ENCODE measurements at regions of chr17 and their contacts with region 1.

Region 1: DNA sequence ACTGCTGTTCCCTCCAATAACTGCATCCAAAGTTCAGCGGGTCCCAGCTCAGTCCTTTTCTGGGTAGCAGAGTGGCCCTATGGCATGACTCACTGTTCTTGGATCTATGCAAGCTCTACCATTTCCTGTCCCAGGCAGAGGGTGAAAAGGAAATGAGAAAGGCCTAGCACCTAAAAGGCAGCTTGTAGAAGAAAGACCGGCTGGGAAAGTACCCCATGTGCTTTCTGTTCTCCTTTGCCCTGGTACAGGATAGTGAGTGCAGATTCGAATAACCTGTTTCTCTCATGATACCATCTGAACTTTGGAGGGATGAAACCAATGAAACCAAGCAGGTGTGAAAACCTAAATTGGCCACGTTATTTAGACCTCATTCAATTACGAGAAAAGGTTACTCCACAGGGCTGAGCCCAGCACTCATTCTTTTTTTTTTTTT is 12.7 kb upstream of the HASPIN start:
- DNase-seq: peak; percentile 30 to 96 (median 67)
- ATAC-seq: peak; percentile 97
- H3K4me3 ChIP-seq: no peak overlapping the region
- H3K4me3 Mint-ChIP-seq: peak overlapping the region; percentile 37
- H3K27ac ChIP-seq: peak overlapping the region in 1 of 2 experiments; percentile 62
- H3K27ac Mint-ChIP-seq: peak overlapping the region; percentile 86
- H3K4me1 ChIP-seq: peaks cover 31% of the 10 kb centered on the region
- H3K4me1 Mint-ChIP-seq: peaks cover 38% of the 10 kb centered on the region
- H3K27me3 ChIP-seq: no peaks in the 10 kb centered on the region
- H3K27me3 Mint-ChIP-seq: no peaks in the 10 kb centered on the region
- CTCF ChIP-seq: no peak

Region 2: DNA sequence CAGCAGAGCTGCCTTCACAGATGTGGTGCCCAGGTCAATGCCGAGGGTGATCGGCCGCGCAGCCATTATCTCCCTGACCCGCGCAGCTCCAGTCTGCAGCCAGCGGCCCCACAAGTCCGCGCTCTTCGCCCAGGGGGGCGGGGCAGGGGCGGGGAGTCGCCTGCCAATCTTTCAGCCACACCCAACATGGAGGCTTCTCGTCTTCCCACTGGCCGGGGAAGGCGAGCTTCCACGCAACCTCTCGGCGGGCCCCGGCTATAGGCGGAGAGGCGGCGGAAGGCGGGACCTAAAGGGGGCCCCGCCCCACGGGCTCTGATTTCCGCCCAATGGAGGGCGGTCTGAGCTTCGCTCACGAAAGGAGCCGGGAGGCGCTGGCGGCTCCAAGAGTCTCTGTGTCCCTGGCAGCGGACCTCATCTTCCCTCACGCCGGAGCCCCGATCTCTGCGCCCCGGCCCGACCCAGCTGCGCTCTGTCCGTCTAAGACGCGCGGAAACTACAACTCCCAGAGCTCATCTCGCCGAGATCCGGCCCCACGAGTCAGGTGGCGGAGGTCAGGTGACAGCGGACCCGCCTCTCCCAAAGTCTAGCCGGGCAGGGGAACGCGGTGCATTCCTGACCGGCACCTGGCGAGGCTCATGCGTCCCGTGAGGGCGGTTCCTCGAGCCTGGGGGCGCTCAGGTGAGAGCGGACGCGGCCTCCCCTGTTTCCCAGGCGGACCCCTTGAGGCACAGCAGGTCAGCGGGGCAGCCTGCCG is 74.6 kb before region 1 on chr17 and contains the starts of genes CTNS and SHPK:
- CTCF ChIA-PET with region 1: no interaction called
- POLR2A ChIA-PET with region 1: no interaction called
- intact Hi-C with region 1: no loop called
- DNase-seq: peak; percentile 86 to 96 (median 94)
- ATAC-seq: peak; percentile 98
- H3K4me3 ChIP-seq: peak within 1 kb of the TSS; percentile 93 to 94
- H3K4me3 Mint-ChIP-seq: peak within 1 kb of the TSS; percentile 97
- H3K27ac ChIP-seq: peak within 1 kb of the TSS; percentile 90 to 99
- H3K27ac Mint-ChIP-seq: peak within 1 kb of the TSS; percentile 99
- H3K4me1 ChIP-seq: peaks cover 8% of the 10 kb centered on the region
- H3K4me1 Mint-ChIP-seq: peaks cover 26% of the 10 kb centered on the region
- H3K27me3 ChIP-seq: no peaks in the 10 kb centered on the region
- H3K27me3 Mint-ChIP-seq: no peaks in the 10 kb centered on the region
- CTCF ChIP-seq: no peak
- total RNA-seq, gene CTNS: 3.1 to 4.2 TPM
- total RNA-seq, gene SHPK: 2.4 to 3.0 TPM

Region 3: GRCh38 chr17:3668279-3669085 is 42.5 kb before region 1 on chr17 and contains the starts of genes EMC6 and TAX1BP3:
- CTCF ChIA-PET with region 1: no interaction called
- POLR2A ChIA-PET with region 1: no interaction called
- intact Hi-C with region 1: loop called in 1 of 2 experiments (anchors 1 kb)
- DNase-seq: peak; percentile 97 to 100 (median 98)
- ATAC-seq: peak; percentile 92
- H3K4me3 ChIP-seq: peak within 1 kb of the TSS; percentile 73 to 100
- H3K4me3 Mint-ChIP-seq: peak within 1 kb of the TSS; percentile 90
- H3K27ac ChIP-seq: peak within 1 kb of the TSS; percentile 58 to 86
- H3K27ac Mint-ChIP-seq: peak within 1 kb of the TSS; percentile 81
- H3K4me1 ChIP-seq: peaks cover 21% of the 10 kb centered on the region
- H3K4me1 Mint-ChIP-seq: peaks cover 22% of the 10 kb centered on the region
- H3K27me3 ChIP-seq: no peaks in the 10 kb centered on the region
- H3K27me3 Mint-ChIP-seq: no peaks in the 10 kb centered on the region
- CTCF ChIP-seq: no peak
- total RNA-seq, gene EMC6: 39.4 to 41.6 TPM
- total RNA-seq, gene TAX1BP3: 5.5 to 5.8 TPM

Region 4: GRCh38 chr17:3683054-3683511 is 27.9 kb before region 1 on chr17:
- CTCF ChIA-PET with region 1: interaction called, 5 read pairs
- POLR2A ChIA-PET with region 1: interaction called, 3 read pairs
- intact Hi-C with region 1: loop called in 1 of 2 experiments (anchors 2 kb)
- DNase-seq: peak; percentile 27 to 80 (median 65)
- ATAC-seq: peak; percentile 99
- H3K4me3 ChIP-seq: no peak overlapping the region
- H3K4me3 Mint-ChIP-seq: no peak overlapping the region
- H3K27ac ChIP-seq: no peak overlapping the region
- H3K27ac Mint-ChIP-seq: no peak overlapping the region
- H3K4me1 ChIP-seq: no peaks in the 10 kb centered on the region
- H3K4me1 Mint-ChIP-seq: peaks cover 8% of the 10 kb centered on the region
- H3K27me3 ChIP-seq: no peaks in the 10 kb centered on the region
- H3K27me3 Mint-ChIP-seq: no peaks in the 10 kb centered on the region
- CTCF ChIP-seq: peak; percentile 78

Region 5: DNA sequence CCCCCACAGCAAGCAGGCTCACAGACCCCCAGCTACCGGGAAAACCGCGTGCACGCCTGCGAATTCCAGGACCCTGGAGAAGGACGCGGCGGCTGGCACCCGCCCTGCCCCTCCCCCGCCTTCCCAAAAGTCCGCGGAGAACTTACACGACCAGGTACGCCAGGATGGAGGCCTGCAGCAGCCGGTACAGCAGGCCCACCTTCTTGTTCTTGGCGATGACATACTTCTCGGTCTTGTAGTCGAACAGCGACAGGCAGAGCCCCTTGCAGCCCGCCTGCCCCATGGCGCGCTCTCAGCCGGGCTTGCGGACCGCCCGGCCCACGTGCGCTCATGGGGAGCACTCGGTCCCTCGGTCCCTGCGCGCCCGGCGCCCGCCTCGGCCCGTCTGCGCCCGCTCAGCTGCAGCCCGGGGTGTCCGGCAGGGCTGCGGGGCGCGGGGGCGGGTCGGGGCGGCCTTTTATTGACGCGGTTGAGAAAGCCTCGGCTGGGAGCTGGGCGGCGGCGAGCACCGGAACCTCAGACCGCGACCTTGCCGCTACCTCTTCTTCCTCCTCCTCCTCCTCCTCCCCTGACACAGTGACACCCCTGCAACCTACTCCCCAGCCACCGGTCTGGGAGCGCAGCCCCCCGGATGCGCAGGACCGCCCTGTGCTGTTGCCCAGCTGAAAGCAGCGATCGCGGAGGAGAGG is 15.1 kb before region 1 on chr17 and contains the start of gene P2RX5:
- CTCF ChIA-PET with region 1: interaction called, 5 read pairs
- POLR2A ChIA-PET with region 1: interaction called, 24 read pairs
- intact Hi-C with region 1: loop called in 1 of 2 experiments (anchors 2 kb)
- DNase-seq: peak in 8 of 9 experiments; percentile 22 to 73 (median 44)
- ATAC-seq: peak; percentile 65
- H3K4me3 ChIP-seq: peak within 1 kb of the TSS; percentile 58 to 68
- H3K4me3 Mint-ChIP-seq: peak within 1 kb of the TSS; percentile 96
- H3K27ac ChIP-seq: peak within 1 kb of the TSS; percentile 41 to 42
- H3K27ac Mint-ChIP-seq: peak within 1 kb of the TSS; percentile 93
- H3K4me1 ChIP-seq: peaks cover 15% of the 10 kb centered on the region
- H3K4me1 Mint-ChIP-seq: peaks cover 23% of the 10 kb centered on the region
- H3K27me3 ChIP-seq: no peaks in the 10 kb centered on the region
- H3K27me3 Mint-ChIP-seq: no peaks in the 10 kb centered on the region
- CTCF ChIP-seq: no peak
- total RNA-seq, gene P2RX5: 15.3 to 18.7 TPM

Region 6: GRCh38 chr17:3750926-3751325 is 40.0 kb after region 1 on chr17:
- CTCF ChIA-PET with region 1: no interaction called
- POLR2A ChIA-PET with region 1: no interaction called
- intact Hi-C with region 1: no loop called
- DNase-seq: peak in 8 of 9 experiments; percentile 22 to 81 (median 66)
- ATAC-seq: peak; percentile 39
- H3K4me3 ChIP-seq: peak overlapping the region in 1 of 2 experiments; percentile 13
- H3K4me3 Mint-ChIP-seq: peak overlapping the region; percentile 80
- H3K27ac ChIP-seq: peak overlapping the region in 1 of 2 experiments; percentile 33
- H3K27ac Mint-ChIP-seq: peak overlapping the region; percentile 90
- H3K4me1 ChIP-seq: peaks cover 36% of the 10 kb centered on the region
- H3K4me1 Mint-ChIP-seq: peaks cover 51% of the 10 kb centered on the region
- H3K27me3 ChIP-seq: no peaks in the 10 kb centered on the region
- H3K27me3 Mint-ChIP-seq: no peaks in the 10 kb centered on the region
- CTCF ChIP-seq: no peak

Region 7: DNA sequence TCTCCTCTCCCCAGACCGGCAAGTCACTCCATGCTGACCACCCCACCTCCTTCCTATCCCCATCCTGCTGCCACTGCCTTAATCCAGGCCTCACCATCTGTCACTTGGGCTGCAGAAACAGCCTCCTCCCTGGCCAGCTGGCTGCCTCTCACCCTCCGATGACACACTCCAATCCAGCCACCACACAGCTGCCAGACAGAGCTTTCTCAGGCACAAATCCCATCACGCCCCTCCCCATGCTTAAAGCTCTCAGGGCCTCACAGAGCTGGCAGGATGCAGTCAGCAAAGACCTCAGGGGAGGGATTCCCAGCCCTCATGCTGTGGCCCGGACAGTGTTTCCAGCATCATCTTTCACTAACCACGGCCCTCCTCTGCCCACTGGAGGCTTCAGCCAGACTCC is 168.2 kb after region 1 on chr17:
- CTCF ChIA-PET with region 1: no interaction called
- POLR2A ChIA-PET with region 1: no interaction called
- intact Hi-C with region 1: no loop called
- DNase-seq: no peak
- ATAC-seq: no peak
- H3K4me3 ChIP-seq: no peak overlapping the region
- H3K4me3 Mint-ChIP-seq: no peak overlapping the region
- H3K27ac ChIP-seq: no peak overlapping the region
- H3K27ac Mint-ChIP-seq: no peak overlapping the region
- H3K4me1 ChIP-seq: no peaks in the 10 kb centered on the region
- H3K4me1 Mint-ChIP-seq: no peaks in the 10 kb centered on the region
- H3K27me3 ChIP-seq: no peaks in the 10 kb centered on the region
- H3K27me3 Mint-ChIP-seq: no peaks in the 10 kb centered on the region
- CTCF ChIP-seq: no peak